ENCODE measurements at regions of chr7 and their contacts with region 1.

Region 1: DNA sequence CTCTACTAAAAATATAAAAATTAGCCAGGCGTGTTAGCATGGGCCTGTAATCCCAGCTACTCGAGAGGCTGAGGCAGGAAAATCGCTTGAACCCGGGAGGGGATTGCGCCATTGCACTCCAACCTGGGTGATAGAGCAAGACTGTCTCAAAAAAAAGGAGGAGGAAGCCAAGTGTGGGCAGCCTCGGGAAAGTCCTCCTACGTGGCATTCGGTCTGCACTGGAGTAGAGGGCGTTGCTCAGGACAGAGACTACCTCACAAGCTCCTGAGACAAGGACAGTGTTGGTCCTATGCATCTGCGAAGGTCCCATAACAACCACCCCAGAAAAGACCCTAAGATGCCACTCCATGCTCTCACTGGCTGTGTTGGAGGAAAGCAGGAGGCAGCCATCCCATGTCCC is 10.0 kb upstream of the SERPINE1 start:
- DNase-seq: no peak

Region 2: DNA sequence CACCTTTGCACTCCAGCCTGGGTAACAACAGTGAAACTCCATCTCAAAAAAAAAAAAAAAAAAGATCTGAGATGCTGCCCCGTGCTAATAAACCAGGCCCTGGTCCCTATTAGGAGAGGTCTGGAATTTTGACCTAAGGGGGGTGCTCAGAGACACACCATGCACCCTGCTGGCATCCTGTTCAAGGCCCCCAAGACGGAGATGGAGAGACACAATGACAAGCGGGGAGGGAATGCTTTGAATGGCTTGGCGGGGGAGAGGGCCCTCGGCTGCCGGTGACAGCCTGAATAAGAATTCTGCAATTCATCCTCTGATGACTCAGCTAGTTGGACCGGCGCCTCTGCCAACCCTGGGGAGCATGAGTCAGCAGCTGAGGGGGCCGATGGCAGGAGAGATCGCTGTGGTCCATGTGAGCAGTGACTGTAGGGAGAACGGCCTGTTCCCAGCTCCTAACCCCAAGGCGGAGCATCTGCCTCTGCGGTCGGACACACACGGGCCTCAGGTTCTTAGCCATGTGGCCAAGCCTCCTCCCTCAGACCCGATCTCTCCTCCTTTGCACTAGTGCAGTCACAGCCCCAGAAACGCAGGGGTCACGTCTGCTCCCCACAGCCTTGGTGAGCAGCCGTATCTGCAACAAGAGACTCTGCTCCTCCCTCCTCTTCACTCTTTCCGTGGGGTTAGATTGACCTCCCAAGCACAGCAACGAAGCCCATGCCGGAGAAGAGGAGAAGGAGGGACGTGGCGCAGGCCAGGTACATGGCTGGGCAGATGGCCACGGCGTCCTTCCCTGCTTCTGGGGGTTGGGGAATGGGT is 16.7 kb before region 1 on chr7:
- intact Hi-C with region 1: loop called (anchors 2 kb)
- DNase-seq: peak; percentile 95

Measured in cardiac septum (tissue), 1 donor.